B cell (primary cell): ENCODE measurements at regions of chr17 and their contacts with region 1.

Region 1: GRCh38 chr17:47889734-47890529 is 6.1 kb upstream of the SP2 start:
- DNase-seq: peak; percentile 87
- ATAC-seq: peak; percentile 95
- H3K4me3 ChIP-seq: no peak overlapping the region
- H3K4me3 Mint-ChIP-seq: no peak overlapping the region
- H3K27ac ChIP-seq: no peak overlapping the region
- H3K27ac Mint-ChIP-seq: peak overlapping the region; percentile 59
- H3K4me1 ChIP-seq: peaks cover 10% of the 10 kb centered on the region in 2 donors
- H3K4me1 Mint-ChIP-seq: peaks cover 22% of the 10 kb centered on the region
- H3K27me3 ChIP-seq: no peaks in the 10 kb centered on the region
- H3K27me3 Mint-ChIP-seq: no peaks in the 10 kb centered on the region
- CTCF ChIP-seq: peak; percentile 95

Region 2: DNA sequence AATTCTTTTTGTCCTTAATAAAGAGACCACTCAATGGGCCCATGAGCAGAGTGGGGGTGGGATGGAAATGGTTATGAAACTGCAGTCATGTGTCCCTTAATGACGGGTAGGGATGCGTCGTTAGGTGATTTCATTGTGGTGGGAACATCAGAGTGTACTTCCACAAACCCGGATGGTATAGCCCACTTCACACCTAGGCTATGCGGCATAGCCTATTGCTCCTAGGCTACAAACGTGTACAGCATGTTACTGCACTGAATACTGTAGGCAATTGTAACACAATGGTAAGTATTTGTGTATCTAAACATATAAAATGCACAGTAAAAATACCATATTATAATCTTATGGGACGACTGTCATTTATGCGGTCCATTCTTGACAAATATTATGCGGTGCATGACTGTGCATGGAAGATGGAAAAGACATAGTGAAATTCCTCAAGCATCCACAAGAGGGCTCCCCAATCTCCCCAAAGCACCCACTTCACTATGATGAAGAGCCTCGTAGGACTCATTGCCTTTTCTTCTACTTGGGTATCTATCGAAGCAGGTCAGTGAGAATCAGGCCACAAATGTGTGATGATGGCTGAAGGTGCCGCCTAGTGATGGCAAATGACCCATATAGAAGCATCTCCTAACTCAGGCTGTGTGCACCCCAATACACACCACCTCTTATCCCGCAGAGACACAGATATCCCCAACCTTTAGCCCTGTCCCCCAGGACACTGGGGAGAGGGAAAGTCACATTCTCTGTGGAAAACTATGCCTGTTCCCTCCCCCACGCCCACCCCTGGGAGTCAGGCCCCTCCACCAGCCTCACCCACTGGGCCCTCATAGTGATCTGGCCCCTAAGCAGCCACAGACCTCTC is 113.4 kb before region 1 on chr17:
- CTCF ChIA-PET with region 1: interaction called, 5 read pairs
- POLR2A ChIA-PET with region 1: no interaction called
- intact Hi-C with region 1: loop called (anchors 1 kb)
- DNase-seq: peak; percentile 66
- ATAC-seq: peak; percentile 65
- H3K4me3 ChIP-seq: no peak overlapping the region
- H3K4me3 Mint-ChIP-seq: no peak overlapping the region
- H3K27ac ChIP-seq: no peak overlapping the region
- H3K27ac Mint-ChIP-seq: no peak overlapping the region
- H3K4me1 ChIP-seq: no peaks in the 10 kb centered on the region
- H3K4me1 Mint-ChIP-seq: no peaks in the 10 kb centered on the region
- H3K27me3 ChIP-seq: peaks cover 0 to 48% (median 25%) of the 10 kb centered on the region in 4 experiments
- H3K27me3 Mint-ChIP-seq: peaks cover 57% of the 10 kb centered on the region
- CTCF ChIP-seq: peak; percentile 84

Region 3: GRCh38 chr17:47806281-47806927 is 83.5 kb before region 1 on chr17:
- CTCF ChIA-PET with region 1: no interaction called
- POLR2A ChIA-PET with region 1: no interaction called
- intact Hi-C with region 1: no loop called
- DNase-seq: no peak
- ATAC-seq: no peak
- H3K4me3 ChIP-seq: no peak overlapping the region
- H3K4me3 Mint-ChIP-seq: no peak overlapping the region
- H3K27ac ChIP-seq: no peak overlapping the region
- H3K27ac Mint-ChIP-seq: no peak overlapping the region
- H3K4me1 ChIP-seq: no peaks in the 10 kb centered on the region
- H3K4me1 Mint-ChIP-seq: peaks cover 1% of the 10 kb centered on the region
- H3K27me3 ChIP-seq: peaks cover 0 to 4% (median 0%) of the 10 kb centered on the region in 4 experiments
- H3K27me3 Mint-ChIP-seq: no peaks in the 10 kb centered on the region
- CTCF ChIP-seq: no peak

Region 4: GRCh38 chr17:47831003-47831933 is 58.7 kb before region 1 on chr17 and contains the starts of genes LRRC46 and MRPL10:
- CTCF ChIA-PET with region 1: interaction called, 436 read pairs
- POLR2A ChIA-PET with region 1: interaction called, 15 read pairs
- intact Hi-C with region 1: loop called (anchors 1 kb)
- DNase-seq: peak; percentile 93
- ATAC-seq: peak; percentile 94
- H3K4me3 ChIP-seq: peak within 1 kb of the TSS; percentile 70 to 97 (median 96)
- H3K4me3 Mint-ChIP-seq: peak within 1 kb of the TSS; percentile 92
- H3K27ac ChIP-seq: peak within 1 kb of the TSS; percentile 69 to 81
- H3K27ac Mint-ChIP-seq: peak within 1 kb of the TSS; percentile 89
- H3K4me1 ChIP-seq: peaks cover 19 to 21% of the 10 kb centered on the region in 2 donors
- H3K4me1 Mint-ChIP-seq: peaks cover 25% of the 10 kb centered on the region
- H3K27me3 ChIP-seq: no peaks in the 10 kb centered on the region
- H3K27me3 Mint-ChIP-seq: no peaks in the 10 kb centered on the region
- CTCF ChIP-seq: peak; percentile 40
- total RNA-seq, gene LRRC46: 2.2 and 2.4 TPM in 2 replicates
- total RNA-seq, gene MRPL10: 34.8 and 37.4 TPM in 2 replicates

Region 5: GRCh38 chr17:47840740-47841603 is 49.0 kb before region 1 on chr17 and contains the start of gene SCRN2:
- CTCF ChIA-PET with region 1: interaction called, 436 read pairs
- POLR2A ChIA-PET with region 1: interaction called, 14 read pairs
- intact Hi-C with region 1: loop called (anchors 1 kb)
- DNase-seq: peak; percentile 90
- ATAC-seq: peak; percentile 94
- H3K4me3 ChIP-seq: peak within 1 kb of the TSS; percentile 58 to 87 (median 79)
- H3K4me3 Mint-ChIP-seq: peak within 1 kb of the TSS; percentile 97
- H3K27ac ChIP-seq: peak within 1 kb of the TSS; percentile 26 to 75
- H3K27ac Mint-ChIP-seq: peak within 1 kb of the TSS; percentile 89
- H3K4me1 ChIP-seq: peaks cover 10 to 18% of the 10 kb centered on the region in 2 donors
- H3K4me1 Mint-ChIP-seq: peaks cover 26% of the 10 kb centered on the region
- H3K27me3 ChIP-seq: peaks cover 0 to 23% (median 12%) of the 10 kb centered on the region in 4 experiments
- H3K27me3 Mint-ChIP-seq: peaks cover 20% of the 10 kb centered on the region
- CTCF ChIP-seq: peak; percentile 94
- total RNA-seq, gene SCRN2: 47.8 and 53.8 TPM in 2 replicates

Region 6: GRCh38 chr17:47872021-47872650 is 17.8 kb before region 1 on chr17:
- CTCF ChIA-PET with region 1: interaction called, 12 read pairs
- POLR2A ChIA-PET with region 1: interaction called, 4 read pairs
- intact Hi-C with region 1: no loop called
- DNase-seq: no peak
- ATAC-seq: no peak
- H3K4me3 ChIP-seq: no peak overlapping the region
- H3K4me3 Mint-ChIP-seq: no peak overlapping the region
- H3K27ac ChIP-seq: no peak overlapping the region
- H3K27ac Mint-ChIP-seq: no peak overlapping the region
- H3K4me1 ChIP-seq: peaks cover 8 to 9% of the 10 kb centered on the region in 2 donors
- H3K4me1 Mint-ChIP-seq: peaks cover 5% of the 10 kb centered on the region
- H3K27me3 ChIP-seq: peaks cover 0 to 62% (median 23%) of the 10 kb centered on the region in 4 experiments
- H3K27me3 Mint-ChIP-seq: peaks cover 53% of the 10 kb centered on the region
- CTCF ChIP-seq: no peak